Common myeloid progenitor, CD34-positive (primary cell): ENCODE measurements at regions of chr12 and their contacts with region 1.

Region 1: GRCh38 chr12:49707128-49707811 is at the start of gene FMNL3:
- DNase-seq: peak; percentile 95 to 98 (median 98)
- H3K4me3 ChIP-seq: peak within 1 kb of the TSS; percentile 60 to 86 (median 78)
- H3K27ac ChIP-seq: peak within 1 kb of the TSS in 1 of 2 experiments; percentile 63
- H3K4me1 ChIP-seq: peaks cover 9 to 44% (median 35%) of the 10 kb centered on the region in 4 experiments
- H3K27me3 ChIP-seq: peaks cover 0 to 2% (median 0%) of the 10 kb centered on the region in 5 experiments

Region 2: DNA sequence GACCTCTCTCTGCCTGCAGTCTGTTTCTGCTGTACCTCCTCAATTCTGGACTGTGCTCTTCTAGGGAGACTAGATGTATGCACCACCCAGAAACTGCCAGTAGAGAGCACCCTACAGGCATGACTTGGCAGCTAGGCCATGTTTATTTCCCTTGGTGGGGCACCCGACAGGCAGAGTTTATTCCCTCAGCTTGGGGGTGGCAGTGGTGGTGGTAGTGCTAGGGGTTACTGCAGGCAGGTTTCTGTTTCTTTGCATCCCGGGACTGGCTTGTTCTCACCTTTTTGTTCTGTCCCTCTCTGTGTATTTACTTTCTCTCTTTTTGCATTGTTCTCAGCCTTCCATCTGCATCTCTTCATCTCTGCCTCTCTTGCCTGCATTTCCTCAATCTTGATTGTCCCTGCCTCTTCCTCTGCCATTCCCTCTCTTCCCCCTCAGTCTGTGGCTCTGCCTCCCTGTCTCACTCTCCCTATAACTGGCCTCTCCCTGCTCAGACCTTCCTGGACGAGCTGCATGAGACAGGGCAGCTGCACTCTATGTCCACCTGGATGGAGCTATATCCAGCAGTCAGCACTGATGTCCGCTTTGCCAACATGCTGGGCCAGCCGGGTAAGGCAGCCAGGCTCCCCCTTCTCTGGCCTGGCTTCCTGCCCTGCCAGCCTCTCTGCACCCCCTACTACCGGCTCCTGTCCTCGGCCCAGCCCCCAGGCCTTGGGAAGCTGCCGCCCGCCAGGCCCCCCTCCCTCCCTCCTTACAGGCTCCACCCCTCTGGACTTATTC is 70.1 kb before region 1 on chr12:
- CTCF ChIA-PET with region 1: interaction called, 929 read pairs
- POLR2A ChIA-PET with region 1: interaction called, 3 read pairs
- DNase-seq: peak; percentile 69 to 85 (median 84)
- H3K4me3 ChIP-seq: peak overlapping the region in 3 of 7 experiments; percentile 1 to 61 (median 38)
- H3K27ac ChIP-seq: no peak overlapping the region
- H3K4me1 ChIP-seq: peaks cover 3 to 13% (median 7%) of the 10 kb centered on the region in 4 experiments
- H3K27me3 ChIP-seq: no peaks in the 10 kb centered on the region

Region 3: DNA sequence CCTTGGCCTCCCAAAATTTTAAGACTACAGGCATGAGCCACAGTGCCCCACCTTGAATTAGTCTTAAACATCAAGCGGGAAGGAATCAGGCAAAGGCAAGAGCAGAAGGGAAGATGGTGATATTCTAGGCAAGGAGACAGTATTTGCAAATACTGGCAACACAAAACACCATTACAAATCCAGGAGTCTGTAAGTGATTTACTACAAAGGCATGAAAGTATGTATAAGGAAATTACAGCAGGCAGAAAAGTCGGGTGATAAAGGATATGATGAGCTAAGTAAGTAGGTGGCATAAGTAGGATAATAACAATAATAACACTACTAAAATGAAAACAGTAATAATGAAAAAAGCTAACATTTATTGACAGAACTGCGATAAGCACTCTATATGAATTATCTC is 28.6 kb before region 1 on chr12:
- CTCF ChIA-PET with region 1: interaction called, 102 read pairs
- POLR2A ChIA-PET with region 1: interaction called, 5 read pairs
- DNase-seq: no peak
- H3K4me3 ChIP-seq: no peak overlapping the region
- H3K27ac ChIP-seq: no peak overlapping the region
- H3K4me1 ChIP-seq: peaks cover 0 to 19% (median 11%) of the 10 kb centered on the region in 4 experiments
- H3K27me3 ChIP-seq: no peaks in the 10 kb centered on the region

Region 4: GRCh38 chr12:49687941-49688340 is 19.3 kb before region 1 on chr12:
- CTCF ChIA-PET with region 1: interaction called, 56 read pairs
- POLR2A ChIA-PET with region 1: interaction called, 4 read pairs
- DNase-seq: no peak
- H3K4me3 ChIP-seq: no peak overlapping the region
- H3K27ac ChIP-seq: no peak overlapping the region
- H3K4me1 ChIP-seq: peaks cover 0 to 9% (median 4%) of the 10 kb centered on the region in 4 experiments
- H3K27me3 ChIP-seq: peaks cover 0 to 1% (median 0%) of the 10 kb centered on the region in 5 experiments

Region 5: GRCh38 chr12:49740930-49741881 is 33.9 kb after region 1 on chr12 and contains the start of gene TMBIM6:
- CTCF ChIA-PET with region 1: interaction called, 12 read pairs
- POLR2A ChIA-PET with region 1: interaction called, 4 read pairs
- DNase-seq: peak; percentile 100
- H3K4me3 ChIP-seq: peak within 1 kb of the TSS; percentile 62 to 94 (median 81)
- H3K27ac ChIP-seq: peak within 1 kb of the TSS; percentile 96 to 99
- H3K4me1 ChIP-seq: peaks cover 12 to 34% (median 21%) of the 10 kb centered on the region in 4 experiments
- H3K27me3 ChIP-seq: no peaks in the 10 kb centered on the region